ENCODE measurements at regions of chr1 and their contacts with region 1.

Region 1: GRCh38 chr1:234716908-234717375 is 107.0 kb upstream of the IRF2BP2 start:
- DNase-seq: peak in 2 of 3 donors; percentile 57 to 59
- ATAC-seq: no peak
- H3K4me3 ChIP-seq: no peak overlapping the region
- H3K27ac ChIP-seq: peak overlapping the region; percentile 60
- H3K4me1 ChIP-seq: peaks cover 22% of the 10 kb centered on the region
- H3K27me3 ChIP-seq: no peaks in the 10 kb centered on the region

Region 2: DNA sequence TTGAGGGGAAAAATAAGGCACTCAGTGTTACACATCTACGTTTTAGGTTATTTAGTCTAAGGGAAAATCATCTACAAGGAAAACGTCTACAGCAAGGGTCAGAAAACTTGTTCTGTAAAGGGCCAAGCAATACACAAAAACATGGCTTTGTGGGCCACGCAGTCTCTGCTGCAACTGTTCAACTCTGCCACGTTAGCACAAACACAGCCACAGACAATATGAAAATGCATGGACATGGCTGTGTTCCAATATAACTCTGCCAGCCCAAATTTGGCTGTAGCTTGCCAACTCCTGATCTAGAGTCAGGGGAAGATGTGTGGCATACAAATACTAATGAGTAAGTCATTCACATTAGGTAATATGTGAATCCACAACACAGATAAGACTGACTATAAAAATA is 303.0 kb before region 1 on chr1:
- intact Hi-C with region 1: no loop called
- DNase-seq: no peak
- ATAC-seq: no peak
- H3K4me3 ChIP-seq: no peak overlapping the region
- H3K27ac ChIP-seq: no peak overlapping the region
- H3K4me1 ChIP-seq: no peaks in the 10 kb centered on the region
- H3K27me3 ChIP-seq: no peaks in the 10 kb centered on the region

Region 3: DNA sequence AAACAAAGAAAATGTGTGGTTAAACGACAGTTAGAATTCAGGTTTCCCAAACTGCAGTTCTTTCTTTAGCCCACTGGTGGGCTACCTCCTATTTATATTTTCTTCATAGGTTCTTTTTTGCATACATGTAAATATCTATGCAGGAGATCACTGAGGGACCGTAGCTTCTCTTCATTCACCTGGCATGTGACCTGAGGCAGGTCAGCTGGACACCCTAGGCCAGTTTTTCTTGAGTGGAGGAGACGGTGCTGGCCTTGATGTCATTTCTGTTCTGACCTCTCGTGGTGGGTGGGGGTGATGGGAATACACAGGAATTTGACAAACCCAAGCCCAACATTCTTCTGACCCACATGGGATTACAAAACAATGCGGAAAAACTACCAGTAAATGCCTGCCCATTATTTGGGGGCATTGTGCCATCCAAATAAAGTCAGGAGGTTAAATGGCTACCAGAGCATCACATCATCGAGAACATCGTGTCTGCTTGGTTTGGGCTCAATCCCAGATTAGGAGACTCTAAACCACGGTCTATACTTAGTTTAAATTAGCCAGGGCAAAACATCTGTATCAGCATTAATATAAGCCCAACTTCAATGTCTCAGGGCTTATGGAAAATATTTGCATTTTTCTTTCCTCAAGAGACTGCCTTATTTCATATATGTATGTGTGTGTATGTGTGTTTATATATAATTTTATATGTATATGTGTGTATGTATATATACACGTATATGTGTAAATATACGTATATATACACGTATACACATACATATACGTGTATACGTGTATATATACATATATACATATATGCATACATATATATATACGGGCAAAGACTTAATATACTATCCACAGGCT is 99.6 kb before region 1 on chr1:
- intact Hi-C with region 1: loop called in 2 of 4 experiments (anchors 2 to 5 kb)
- DNase-seq: no peak
- ATAC-seq: no peak
- H3K4me3 ChIP-seq: no peak overlapping the region
- H3K27ac ChIP-seq: no peak overlapping the region
- H3K4me1 ChIP-seq: no peaks in the 10 kb centered on the region
- H3K27me3 ChIP-seq: no peaks in the 10 kb centered on the region